GM12878 (cell line): ENCODE measurements at regions of chr3 and their contacts with region 1.

Region 1: DNA sequence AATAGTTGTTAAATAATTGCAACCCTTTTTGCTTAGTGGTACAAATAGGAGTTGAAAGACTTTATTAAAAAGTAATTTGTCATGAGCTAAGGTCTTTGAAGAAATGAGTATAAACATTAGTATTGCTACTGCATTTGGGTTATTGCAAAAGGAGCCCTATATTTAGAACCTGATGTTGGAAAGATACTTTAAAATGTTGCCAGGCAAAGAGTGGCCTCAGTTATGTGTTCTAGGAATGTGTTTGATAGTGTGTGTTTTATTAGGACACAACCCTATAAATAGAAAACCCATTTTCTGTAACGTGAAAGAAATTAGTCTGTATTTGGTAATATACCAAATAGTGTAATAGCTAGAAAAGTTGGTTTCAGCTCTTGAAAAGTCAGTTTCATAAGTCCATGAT is 10.7 kb downstream of the VPS8 start:
- DNase-seq: no peak
- ATAC-seq: no peak
- H3K4me3 ChIP-seq: no peak overlapping the region
- H3K27ac ChIP-seq: no peak overlapping the region
- H3K4me1 ChIP-seq: no peaks in the 10 kb centered on the region
- H3K27me3 ChIP-seq: no peaks in the 10 kb centered on the region
- CTCF ChIP-seq: no peak
- EP300 ChIP-seq: no peak
- POLR2A ChIP-seq: no peak
- RAD21 ChIP-seq: no peak

Region 2: GRCh38 chr3:184811999-184812661 is 10.5 kb before region 1 on chr3 and contains the start of gene VPS8:
- CTCF ChIA-PET with region 1: interaction called, 10 read pairs
- POLR2A ChIA-PET with region 1: interaction called, 3 read pairs
- RAD21 ChIA-PET with region 1: interaction called, 3 read pairs
- SMC1A ChIA-PET with region 1: interaction called, 24 read pairs
- in situ Hi-C with region 1: no loop called
- intact Hi-C with region 1: no loop called
- DNase-seq: peak; percentile 91
- ATAC-seq: peak; percentile 95
- H3K4me3 ChIP-seq: peak within 1 kb of the TSS; percentile 74
- H3K27ac ChIP-seq: peak within 1 kb of the TSS; percentile 54
- H3K4me1 ChIP-seq: peaks cover 16% of the 10 kb centered on the region
- H3K27me3 ChIP-seq: no peaks in the 10 kb centered on the region
- CTCF ChIP-seq: peak; percentile 41 to 49 (median 45); a peak in 5 of 6 replicates
- EP300 ChIP-seq: no peak
- POLR2A ChIP-seq: peak; percentile 93
- RAD21 ChIP-seq: no peak
- polyA plus RNA-seq, gene VPS8: 8.9 to 11.4 TPM

Region 3: DNA sequence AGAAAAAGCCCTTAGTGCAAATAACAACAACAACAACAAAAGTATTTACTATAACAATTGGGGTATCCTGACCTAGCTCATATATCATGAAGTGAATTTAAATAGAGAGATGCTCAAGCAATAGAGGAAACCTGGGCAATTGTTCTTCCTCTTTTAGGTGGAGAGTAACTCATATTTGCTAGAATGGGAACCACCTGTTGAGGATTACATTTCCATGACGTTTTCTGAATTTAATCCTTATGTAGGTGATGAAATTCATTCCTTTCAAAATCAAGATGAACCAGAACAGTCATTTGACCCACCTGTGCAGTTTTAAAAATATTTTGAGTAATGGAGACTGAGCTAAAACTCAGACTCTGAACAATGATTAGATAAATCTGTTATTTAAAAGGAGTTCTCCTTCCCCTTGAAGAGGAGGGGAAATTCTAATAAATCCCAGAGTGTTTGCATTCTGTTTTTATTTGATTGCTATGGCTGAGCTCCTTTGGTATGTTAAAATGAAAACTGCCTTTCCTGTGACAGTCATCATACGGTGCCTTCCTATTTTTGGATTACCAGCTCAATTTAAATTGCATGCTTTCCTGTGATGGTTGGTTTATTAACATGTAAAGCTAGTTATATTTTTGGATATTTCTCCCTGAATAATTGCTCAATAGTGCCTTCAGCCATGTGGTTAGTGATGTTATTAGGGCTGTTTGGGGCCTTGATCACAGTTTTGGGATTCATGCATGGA is 13.6 kb after region 1 on chr3:
- CTCF ChIA-PET with region 1: interaction called, 8 read pairs
- POLR2A ChIA-PET with region 1: interaction called, 3 read pairs
- RAD21 ChIA-PET with region 1: no interaction called
- SMC1A ChIA-PET with region 1: interaction called, 12 read pairs
- in situ Hi-C with region 1: no loop called
- intact Hi-C with region 1: no loop called
- DNase-seq: no peak
- ATAC-seq: no peak
- H3K4me3 ChIP-seq: no peak overlapping the region
- H3K27ac ChIP-seq: no peak overlapping the region
- H3K4me1 ChIP-seq: no peaks in the 10 kb centered on the region
- H3K27me3 ChIP-seq: no peaks in the 10 kb centered on the region
- CTCF ChIP-seq: no peak
- EP300 ChIP-seq: no peak
- POLR2A ChIP-seq: no peak
- RAD21 ChIP-seq: no peak